ENCODE measurements at regions of chr15 and their contacts with region 1.

Region 1: GRCh38 chr15:70722266-70723121 is 40.9 kb downstream of the UACA start:
- DNase-seq: peak; percentile 39
- CTCF ChIP-seq: peak; percentile 64

Region 2: DNA sequence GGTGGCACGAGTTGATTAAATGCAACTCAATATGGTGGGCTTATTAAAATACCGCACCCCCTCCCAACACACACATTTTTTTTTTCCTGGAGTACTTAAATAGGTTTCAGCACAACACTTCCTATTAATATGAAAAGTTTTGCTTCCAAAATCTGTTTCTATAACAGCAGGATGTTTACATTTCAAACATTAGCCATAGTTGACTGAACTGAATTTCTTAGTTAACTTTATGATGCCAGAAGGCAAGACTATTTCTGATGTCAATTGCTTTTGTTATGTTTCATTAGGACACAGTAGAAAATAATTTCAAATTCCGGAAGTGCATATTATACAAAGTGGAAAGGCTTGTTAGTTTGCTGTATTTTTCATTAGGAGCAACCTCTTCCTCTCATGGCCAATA is 63.9 kb before region 1 on chr15:
- CTCF ChIA-PET with region 1: no interaction called
- POLR2A ChIA-PET with region 1: no interaction called
- DNase-seq: no peak
- CTCF ChIP-seq: no peak

Region 3: GRCh38 chr15:70670680-70671079 is 51.8 kb before region 1 on chr15:
- CTCF ChIA-PET with region 1: interaction called, 12 read pairs
- POLR2A ChIA-PET with region 1: no interaction called
- DNase-seq: no peak
- CTCF ChIP-seq: no peak

Region 4: DNA sequence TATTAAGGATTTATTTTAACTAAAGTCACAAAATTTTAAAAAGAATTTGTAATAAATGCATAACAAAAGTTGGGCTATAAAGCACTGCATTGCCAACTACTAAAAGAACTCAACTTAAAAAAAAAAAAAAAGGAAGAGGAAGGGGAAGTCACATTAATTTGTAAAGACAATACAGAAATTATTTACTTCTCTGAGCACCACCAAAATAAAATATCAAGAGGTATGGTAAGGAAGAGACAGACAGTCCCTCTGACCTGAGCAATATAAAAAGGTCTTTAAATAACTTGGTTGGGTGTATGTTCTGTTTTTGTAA is 42.6 kb before region 1 on chr15:
- CTCF ChIA-PET with region 1: interaction called, 33 read pairs
- POLR2A ChIA-PET with region 1: no interaction called
- DNase-seq: no peak
- CTCF ChIP-seq: no peak

Region 5: DNA sequence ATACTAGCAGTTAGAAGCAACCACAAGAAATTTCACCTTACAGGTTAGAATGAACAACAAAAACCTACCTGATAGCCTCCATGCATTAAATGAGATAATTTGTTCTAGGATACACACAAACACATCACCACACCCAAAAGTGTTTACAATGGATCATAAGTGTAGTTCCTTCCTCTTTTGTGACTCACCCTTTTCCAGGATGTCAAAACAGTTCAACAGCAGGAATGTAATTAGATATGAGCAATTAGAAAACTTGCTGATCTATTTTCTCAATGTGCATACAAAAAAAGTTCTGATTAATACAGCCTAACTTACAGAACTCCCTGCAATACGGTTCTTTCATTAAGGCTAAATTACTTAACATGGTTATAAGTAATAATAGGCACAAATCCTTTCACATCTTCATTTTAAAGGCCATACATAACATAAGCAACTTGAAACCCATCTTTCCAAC is 19.4 kb after region 1 on chr15:
- CTCF ChIA-PET with region 1: interaction called, 10 read pairs
- POLR2A ChIA-PET with region 1: no interaction called
- DNase-seq: no peak
- CTCF ChIP-seq: no peak

Measured in GM10248 (cell line).